HEK293 (cell line): ENCODE measurements at regions of chr10 and their contacts with region 1.

Region 1: DNA sequence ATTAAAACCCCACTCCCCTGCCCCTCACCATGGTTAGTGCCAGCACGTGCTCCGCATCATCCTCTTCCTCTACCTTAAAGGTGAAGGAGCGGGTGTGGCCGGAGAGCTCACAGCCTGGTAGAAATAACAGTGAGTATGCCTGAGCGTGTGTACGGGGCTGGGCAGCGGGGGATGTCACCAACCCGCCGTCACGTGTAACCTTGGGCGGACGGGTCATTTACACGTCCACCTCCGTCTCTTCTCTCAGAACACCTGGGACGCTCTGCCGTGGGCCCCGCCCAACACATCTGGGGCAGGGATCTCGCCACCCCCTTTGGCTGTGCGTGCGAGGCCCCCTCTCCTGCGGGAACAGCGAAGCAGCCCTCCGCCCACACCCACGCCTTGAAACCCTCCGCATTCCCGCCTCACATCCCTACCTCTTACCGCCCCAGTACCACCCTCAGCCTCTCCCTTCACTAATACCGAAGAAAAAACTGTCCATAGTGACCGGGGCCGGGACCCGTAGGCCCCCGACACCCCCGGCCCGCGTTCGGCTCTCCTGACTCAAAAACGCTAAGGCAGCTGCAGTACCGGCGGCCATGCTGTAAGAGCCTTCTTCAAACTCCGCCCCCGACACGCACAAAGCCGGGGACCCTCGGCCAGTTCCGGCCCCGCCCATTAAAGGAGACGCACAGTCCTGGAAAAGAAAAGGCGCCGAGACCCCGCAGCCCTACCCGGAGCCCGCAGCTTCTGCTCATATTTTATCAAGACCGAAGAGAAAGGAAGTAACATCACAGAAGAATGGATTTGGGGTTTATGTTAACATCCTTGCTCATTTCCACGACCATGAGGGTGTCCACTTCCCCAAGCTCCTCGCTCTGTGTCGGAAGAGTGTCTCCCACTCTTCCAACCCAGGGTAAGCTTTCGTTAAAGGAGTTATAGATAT is at the start of gene NPM3:
- H3K4me3 ChIP-seq: peak within 1 kb of the TSS; percentile 81
- H3K27ac ChIP-seq: peak within 1 kb of the TSS; percentile 37
- H3K4me1 ChIP-seq: peaks cover 18% of the 10 kb centered on the region
- CTCF ChIP-seq: no peak

Region 2: DNA sequence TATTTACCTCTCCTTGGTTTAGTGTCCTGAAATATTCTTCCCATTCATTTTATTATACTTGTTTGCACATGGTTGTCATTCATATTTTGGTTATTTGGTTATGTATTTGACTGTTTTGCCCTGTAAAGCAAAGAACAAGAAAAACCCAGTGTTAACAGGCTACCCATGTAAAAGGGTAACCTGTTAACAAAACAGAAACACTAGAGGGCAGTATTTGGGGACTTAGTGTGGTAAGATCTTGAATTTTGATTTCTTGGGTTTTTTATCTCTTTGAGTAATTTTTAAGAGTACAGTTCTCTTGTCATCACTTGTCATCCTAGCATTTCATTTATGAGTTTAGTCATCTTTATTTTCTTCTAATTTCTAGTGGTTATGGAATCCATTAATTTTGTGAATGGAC is 246.3 kb before region 1 on chr10:
- CTCF ChIA-PET with region 1: interaction called, 11 read pairs
- POLR2A ChIA-PET with region 1: no interaction called
- H3K4me3 ChIP-seq: no peak overlapping the region
- H3K27ac ChIP-seq: no peak overlapping the region
- H3K4me1 ChIP-seq: no peaks in the 10 kb centered on the region
- CTCF ChIP-seq: 0 out of 2 replicates have a peak, but pooled peaks have one; percentile 18

Region 3: GRCh38 chr10:101560298-101561067 is 222.6 kb before region 1 on chr10:
- CTCF ChIA-PET with region 1: no interaction called
- POLR2A ChIA-PET with region 1: no interaction called
- H3K4me3 ChIP-seq: no peak overlapping the region
- H3K27ac ChIP-seq: no peak overlapping the region
- H3K4me1 ChIP-seq: no peaks in the 10 kb centered on the region
- CTCF ChIP-seq: no peak

Region 4: GRCh38 chr10:101602761-101603398 is 180.2 kb before region 1 on chr10:
- CTCF ChIA-PET with region 1: interaction called, 203 read pairs
- POLR2A ChIA-PET with region 1: interaction called, 11 read pairs
- H3K4me3 ChIP-seq: no peak overlapping the region
- H3K27ac ChIP-seq: no peak overlapping the region
- H3K4me1 ChIP-seq: no peaks in the 10 kb centered on the region
- CTCF ChIP-seq: peak; percentile 98

Region 5: DNA sequence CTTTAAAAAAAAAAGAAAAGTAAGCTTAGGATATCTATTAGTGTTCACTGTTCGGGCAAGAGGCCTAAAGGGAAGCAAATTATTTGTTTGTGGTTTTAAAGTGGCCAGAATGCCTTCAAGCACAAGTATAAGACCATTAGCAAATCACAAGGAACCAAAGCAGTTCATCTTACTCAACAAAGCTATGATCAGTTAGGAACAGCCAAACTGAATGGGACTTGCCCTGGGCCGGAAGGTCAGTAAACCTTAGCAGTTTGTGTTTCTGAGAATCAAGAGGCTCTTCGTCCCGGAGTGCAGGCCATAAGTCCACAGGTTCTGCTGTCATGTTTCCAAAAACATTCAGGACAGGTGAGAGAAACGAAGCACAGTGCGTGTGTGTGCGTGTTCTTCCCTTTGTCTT is 92.6 kb before region 1 on chr10:
- CTCF ChIA-PET with region 1: interaction called, 17 read pairs
- POLR2A ChIA-PET with region 1: interaction called, 3 read pairs
- H3K4me3 ChIP-seq: no peak overlapping the region
- H3K27ac ChIP-seq: no peak overlapping the region; the same call in 1 of the 2 replicates
- H3K4me1 ChIP-seq: peaks cover 44% of the 10 kb centered on the region
- CTCF ChIP-seq: no peak

Region 6: GRCh38 chr10:101793526-101793925 is 10.5 kb after region 1 on chr10:
- CTCF ChIA-PET with region 1: interaction called, 16 read pairs
- POLR2A ChIA-PET with region 1: interaction called, 3 read pairs
- H3K4me3 ChIP-seq: no peak overlapping the region
- H3K27ac ChIP-seq: no peak overlapping the region
- H3K4me1 ChIP-seq: peaks cover 3% of the 10 kb centered on the region; the same call in 1 of the 2 replicates
- CTCF ChIP-seq: no peak

Region 7: GRCh38 chr10:101867931-101868330 is 84.9 kb after region 1 on chr10:
- CTCF ChIA-PET with region 1: no interaction called
- POLR2A ChIA-PET with region 1: no interaction called
- H3K4me3 ChIP-seq: no peak overlapping the region
- H3K27ac ChIP-seq: no peak overlapping the region
- H3K4me1 ChIP-seq: no peaks in the 10 kb centered on the region
- CTCF ChIP-seq: no peak